ENCODE measurements at regions of chr17 and their contacts with region 1.

Region 1: GRCh38 chr17:58317421-58318064 is 11.1 kb downstream of the TSPOAP1 start:
- DNase-seq: peak; percentile 26
- H3K4me3 ChIP-seq: no peak overlapping the region
- H3K27ac ChIP-seq: no peak overlapping the region
- H3K4me1 ChIP-seq: no peaks in the 10 kb centered on the region
- H3K27me3 ChIP-seq: no peaks in the 10 kb centered on the region
- CTCF ChIP-seq: peak; percentile 46 to 71
- POLR2A ChIP-seq: no peak

Region 2: DNA sequence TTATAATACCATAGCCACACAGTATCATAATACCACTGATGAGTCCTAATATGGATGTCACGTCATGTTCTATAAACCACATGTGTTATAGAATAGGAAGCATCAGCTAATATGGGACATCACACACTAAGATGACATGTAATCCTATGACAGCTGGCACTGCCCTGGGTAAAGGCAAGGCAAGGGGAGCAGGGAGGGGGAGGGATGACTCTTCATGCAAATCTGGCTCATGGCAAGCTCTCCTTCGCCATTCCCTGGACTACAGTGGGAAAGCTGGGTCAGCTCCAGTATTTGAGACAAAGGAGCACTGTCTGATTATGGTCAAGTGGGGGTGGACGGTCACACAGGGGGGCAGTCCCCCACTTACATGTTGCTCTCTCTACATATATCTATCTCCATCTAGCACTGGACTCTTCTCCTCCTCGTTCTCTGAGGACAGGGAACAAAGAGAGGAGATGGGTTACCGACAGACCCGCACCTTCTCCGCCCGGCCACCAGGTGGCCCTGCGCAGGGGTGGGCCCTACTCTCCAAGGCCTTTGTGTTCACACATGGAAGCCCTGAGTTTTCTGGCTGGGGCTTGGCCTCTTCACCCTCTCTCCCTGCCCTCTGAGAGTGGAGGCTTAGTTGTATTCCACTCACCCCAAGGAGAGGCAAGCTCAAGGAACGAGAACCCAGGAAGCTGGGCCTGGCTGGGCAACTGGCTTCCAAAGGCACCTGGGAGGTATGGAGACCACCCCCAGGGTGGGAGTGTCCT is 13.4 kb before region 1 on chr17:
- CTCF ChIA-PET with region 1: interaction called, 12 read pairs
- POLR2A ChIA-PET with region 1: no interaction called
- dilution Hi-C with region 1: no loop called
- intact Hi-C with region 1: no loop called
- DNase-seq: peak; percentile 26
- H3K4me3 ChIP-seq: no peak overlapping the region
- H3K27ac ChIP-seq: no peak overlapping the region
- H3K4me1 ChIP-seq: no peaks in the 10 kb centered on the region
- H3K27me3 ChIP-seq: peaks cover 0 to 6% of the 10 kb centered on the region in 2 experiments
- CTCF ChIP-seq: peak; percentile 80 to 84
- POLR2A ChIP-seq: no peak

Region 3: GRCh38 chr17:58332778-58333735 is 15.5 kb after region 1 on chr17:
- CTCF ChIA-PET with region 1: no interaction called
- POLR2A ChIA-PET with region 1: no interaction called
- dilution Hi-C with region 1: no loop called
- intact Hi-C with region 1: no loop called
- DNase-seq: no peak
- H3K4me3 ChIP-seq: no peak overlapping the region
- H3K27ac ChIP-seq: no peak overlapping the region
- H3K4me1 ChIP-seq: no peaks in the 10 kb centered on the region
- H3K27me3 ChIP-seq: no peaks in the 10 kb centered on the region
- CTCF ChIP-seq: no peak
- POLR2A ChIP-seq: no peak

Region 4: GRCh38 chr17:58432806-58433572 is 115.4 kb after region 1 on chr17:
- CTCF ChIA-PET with region 1: interaction called, 12 read pairs
- POLR2A ChIA-PET with region 1: no interaction called
- dilution Hi-C with region 1: no loop called
- intact Hi-C with region 1: no loop called
- DNase-seq: no peak
- H3K4me3 ChIP-seq: no peak overlapping the region
- H3K27ac ChIP-seq: no peak overlapping the region
- H3K4me1 ChIP-seq: no peaks in the 10 kb centered on the region
- H3K27me3 ChIP-seq: peaks cover 4% of the 10 kb centered on the region in 2 experiments
- CTCF ChIP-seq: no peak
- POLR2A ChIP-seq: no peak

Measured in endothelial cell of umbilical vein (primary cell).